ENCODE measurements at regions of chr12 and their contacts with region 1.

Region 1: DNA sequence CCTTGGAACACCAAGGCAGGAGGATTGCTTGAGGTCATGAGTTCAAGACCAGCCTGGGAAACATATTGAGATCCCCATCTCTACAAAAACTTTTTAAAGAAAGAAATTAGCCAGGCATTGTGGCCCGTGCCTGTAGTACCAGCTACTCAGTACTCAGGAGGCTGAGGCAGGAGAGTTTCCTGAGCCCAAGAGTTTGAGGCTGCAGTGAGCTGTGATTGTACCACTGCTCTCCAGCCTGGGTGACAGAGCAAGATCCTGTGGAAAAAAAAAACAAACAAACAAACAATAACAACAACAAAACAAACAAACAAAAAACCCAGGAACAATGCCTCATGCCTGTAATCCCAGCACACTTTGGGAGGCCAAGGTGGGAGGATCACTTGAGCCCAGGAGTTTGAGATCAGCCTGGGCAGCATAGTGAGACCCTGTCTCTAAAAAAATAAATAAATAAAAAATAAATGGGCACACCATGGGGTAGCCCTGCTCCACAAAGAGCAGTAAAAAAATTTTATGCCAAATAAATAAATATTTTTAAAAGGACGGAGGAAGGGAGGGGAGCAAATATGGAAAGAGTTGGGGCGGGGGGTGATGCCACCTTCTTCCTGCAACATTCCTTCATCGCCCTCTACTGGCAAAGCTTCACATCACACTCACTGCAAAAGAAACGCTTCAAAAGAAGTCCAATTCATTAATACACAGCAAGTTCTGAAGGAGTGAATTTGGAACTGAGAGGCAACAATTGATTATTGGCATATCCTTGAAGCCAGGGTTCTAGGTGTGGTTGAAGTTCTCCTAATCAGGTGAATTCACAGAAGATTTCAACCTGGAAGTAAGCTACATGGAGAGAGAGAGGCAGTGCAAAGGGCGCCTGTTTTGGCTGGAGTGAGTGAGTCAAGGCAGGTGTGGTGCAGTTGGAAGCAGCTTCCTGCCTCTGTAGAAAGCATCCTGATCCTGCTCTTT is 8.8 kb upstream of the GNPTAB start:
- DNase-seq: peak; percentile 78 to 87 (median 82)
- H3K4me3 ChIP-seq: peak overlapping the region in 1 of 7 experiments; percentile 16
- H3K27ac ChIP-seq: no peak overlapping the region
- H3K4me1 ChIP-seq: peaks cover 4 to 17% (median 8%) of the 10 kb centered on the region in 4 experiments
- H3K27me3 ChIP-seq: no peaks in the 10 kb centered on the region

Region 2: GRCh38 chr12:101782273-101782731 is 57.3 kb before region 1 on chr12:
- CTCF ChIA-PET with region 1: interaction called, 30 read pairs
- POLR2A ChIA-PET with region 1: no interaction called
- DNase-seq: no peak
- H3K4me3 ChIP-seq: no peak overlapping the region
- H3K27ac ChIP-seq: no peak overlapping the region
- H3K4me1 ChIP-seq: peaks cover 21 to 69% (median 40%) of the 10 kb centered on the region in 4 experiments
- H3K27me3 ChIP-seq: no peaks in the 10 kb centered on the region

Region 3: DNA sequence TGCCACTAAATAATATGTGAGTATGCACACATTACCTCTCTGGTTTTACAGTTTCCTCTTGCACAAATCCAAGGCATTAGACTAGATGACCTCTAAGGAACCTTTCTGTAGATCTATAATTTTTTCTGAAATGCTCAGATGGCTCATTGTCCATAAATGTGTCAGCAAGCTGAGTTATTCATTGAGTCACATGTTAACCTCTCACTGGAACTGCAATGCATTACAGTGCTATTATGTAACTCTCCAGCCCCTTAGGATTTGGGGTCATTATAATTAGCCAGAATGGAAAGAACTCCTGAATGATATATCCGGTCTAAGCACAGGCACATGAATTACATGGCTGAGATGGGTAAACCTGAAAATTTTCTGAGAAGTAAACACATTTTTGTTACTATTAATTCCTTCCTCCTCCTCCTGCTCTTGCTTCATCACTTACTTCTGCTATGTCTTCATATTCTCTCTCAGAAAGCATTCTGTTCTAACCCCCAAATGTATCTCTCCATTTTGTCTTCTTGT is 17.5 kb after region 1 on chr12:
- CTCF ChIA-PET with region 1: interaction called, 18 read pairs
- POLR2A ChIA-PET with region 1: no interaction called
- DNase-seq: no peak
- H3K4me3 ChIP-seq: no peak overlapping the region
- H3K27ac ChIP-seq: no peak overlapping the region
- H3K4me1 ChIP-seq: peaks cover 13 to 45% (median 37%) of the 10 kb centered on the region in 4 experiments
- H3K27me3 ChIP-seq: no peaks in the 10 kb centered on the region

Measured in common myeloid progenitor, CD34-positive (primary cell).